Heart right ventricle (tissue), 16 donors: ENCODE measurements at regions of chr3 and their contacts with region 1.

Region 1: GRCh38 chr3:190892328-190893011 is 30.0 kb upstream of the GMNC start:
- DNase-seq: no peak
- ATAC-seq: no peak
- H3K4me3 ChIP-seq: no peak overlapping the region
- H3K27ac ChIP-seq: no peak overlapping the region
- H3K4me1 ChIP-seq: no peaks in the 10 kb centered on the region
- H3K27me3 ChIP-seq: peaks cover 0 to 4% (median 0%) of the 10 kb centered on the region in 7 donors
- CTCF ChIP-seq: no peak

Region 2: GRCh38 chr3:190183121-190183520 is 709.3 kb before region 1 on chr3:
- intact Hi-C with region 1: no loop called
- DNase-seq: peak in 1 of 2 donors; percentile 8
- ATAC-seq: peak in 5 of 8 donors; percentile 29 to 83 (median 63)
- H3K4me3 ChIP-seq: no peak overlapping the region
- H3K27ac ChIP-seq: peak overlapping the region in 1 of 10 donors; percentile 3
- H3K4me1 ChIP-seq: peaks cover 0 to 5% (median 0%) of the 10 kb centered on the region in 9 donors
- H3K27me3 ChIP-seq: no peaks in the 10 kb centered on the region
- CTCF ChIP-seq: no peak

Region 3: DNA sequence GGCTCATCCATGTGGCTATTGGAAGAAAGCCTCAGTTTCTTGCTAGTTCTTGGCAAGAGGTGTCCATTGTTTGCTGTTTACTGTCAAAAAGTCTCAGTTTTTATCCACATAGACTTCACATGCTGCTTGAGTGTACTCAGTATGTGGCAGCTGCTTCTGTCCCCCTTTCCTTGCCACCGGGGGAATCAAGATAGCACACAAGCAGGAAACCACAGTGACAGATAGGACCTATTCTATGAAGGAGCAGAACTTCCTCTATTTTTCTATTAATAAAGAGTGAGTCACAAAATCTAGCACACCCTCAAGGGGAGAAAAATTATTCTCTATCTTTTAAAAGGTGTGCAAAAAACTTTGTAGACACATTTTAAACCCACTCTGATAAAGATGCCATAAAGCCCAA is 91.4 kb after region 1 on chr3:
- intact Hi-C with region 1: no loop called
- DNase-seq: no peak
- ATAC-seq: no peak
- H3K4me3 ChIP-seq: no peak overlapping the region
- H3K27ac ChIP-seq: no peak overlapping the region
- H3K4me1 ChIP-seq: no peaks in the 10 kb centered on the region
- H3K27me3 ChIP-seq: no peaks in the 10 kb centered on the region
- CTCF ChIP-seq: no peak

Region 4: DNA sequence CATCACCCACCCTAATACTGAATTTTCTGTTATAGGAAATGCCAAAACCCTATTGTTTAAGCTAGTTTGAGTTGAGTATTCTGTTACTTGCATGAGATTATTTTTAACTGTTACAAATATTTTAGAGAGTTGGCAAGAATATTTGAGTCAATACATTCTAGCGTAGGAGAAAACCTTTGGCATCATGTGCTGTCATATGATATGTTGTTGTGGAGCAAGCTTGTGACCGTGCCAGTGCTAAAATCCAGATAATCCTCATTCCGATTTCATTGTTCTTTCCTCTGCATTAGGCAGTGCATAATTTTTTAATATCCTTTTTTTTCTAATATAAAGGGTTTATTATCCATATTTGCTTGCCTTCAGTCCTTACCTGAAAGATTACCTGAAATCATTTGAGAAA is 138.0 kb after region 1 on chr3:
- intact Hi-C with region 1: loop called in 1 of 10 experiments (anchors 10 kb)
- DNase-seq: no peak
- ATAC-seq: no peak
- H3K4me3 ChIP-seq: no peak overlapping the region
- H3K27ac ChIP-seq: no peak overlapping the region
- H3K4me1 ChIP-seq: peaks cover 0 to 6% (median 0%) of the 10 kb centered on the region in 9 donors
- H3K27me3 ChIP-seq: no peaks in the 10 kb centered on the region
- CTCF ChIP-seq: no peak

Region 5: DNA sequence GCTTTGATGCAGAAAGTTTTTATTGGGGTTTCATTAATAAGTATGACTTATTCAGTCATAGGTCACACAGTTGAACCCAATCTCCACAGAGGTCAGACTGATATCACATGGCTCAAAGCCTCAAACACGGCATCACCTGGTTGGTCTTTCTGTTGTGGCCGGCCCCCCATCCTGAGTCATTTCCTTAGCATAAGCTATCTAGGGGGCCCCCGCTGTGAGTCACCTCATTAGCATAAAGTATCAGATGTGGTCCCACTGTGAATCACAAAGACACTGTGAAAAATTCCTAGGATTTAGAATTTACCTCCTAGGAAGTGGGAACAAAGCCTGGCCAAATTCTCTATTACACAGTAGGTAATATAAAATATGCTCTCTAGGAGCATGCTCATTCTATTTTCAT is 1070.7 kb after region 1 on chr3:
- intact Hi-C with region 1: no loop called
- DNase-seq: no peak
- ATAC-seq: no peak
- H3K4me3 ChIP-seq: no peak overlapping the region
- H3K27ac ChIP-seq: no peak overlapping the region
- H3K4me1 ChIP-seq: no peaks in the 10 kb centered on the region
- H3K27me3 ChIP-seq: no peaks in the 10 kb centered on the region
- CTCF ChIP-seq: no peak